Posterior vena cava (tissue), 2 donors: ENCODE measurements at regions of chr14 and their contacts with region 1.

Region 1: DNA sequence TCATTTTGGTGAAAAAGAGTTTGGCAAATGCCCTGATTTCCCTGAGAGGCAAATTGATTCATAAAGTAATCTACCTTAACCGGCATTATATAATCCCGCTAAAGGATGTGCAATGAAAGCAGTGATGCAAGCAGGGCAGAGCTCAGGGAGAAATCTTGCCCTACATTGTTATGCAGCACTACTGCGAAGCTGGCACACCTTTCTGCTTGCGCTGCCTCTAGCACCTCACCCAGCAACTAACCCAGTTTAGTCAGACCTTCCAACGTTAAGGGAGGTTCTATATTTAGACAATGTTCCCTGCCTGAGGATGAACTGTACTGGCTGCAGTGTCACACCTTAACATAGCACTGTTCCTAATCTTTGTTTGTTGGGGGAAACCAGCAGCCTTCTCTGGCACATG is 60.8 kb upstream of the CCDC196 start:
- DNase-seq: no peak

Region 2: DNA sequence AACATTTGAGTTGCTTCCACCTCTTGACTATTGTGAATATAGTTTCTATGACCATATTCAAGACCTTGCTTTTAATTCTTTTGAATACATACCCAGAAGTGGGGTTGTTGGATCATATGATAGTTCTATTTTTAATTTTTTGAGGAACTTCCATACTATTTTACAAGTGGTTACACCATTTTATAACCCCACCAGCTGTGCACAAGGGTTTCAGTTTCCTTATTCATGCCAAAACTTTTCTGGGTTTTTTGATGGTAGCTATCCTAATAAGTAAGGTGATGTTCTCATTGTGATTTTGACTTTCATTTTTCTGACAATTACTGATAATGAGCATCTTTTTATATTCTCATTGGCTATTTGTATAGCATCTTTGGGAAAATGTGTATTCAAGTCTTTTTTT is 654.4 kb after region 1 on chr14:
- intact Hi-C with region 1: loop called in 1 of 2 experiments (anchors 5 kb)
- DNase-seq: no peak

Region 3: DNA sequence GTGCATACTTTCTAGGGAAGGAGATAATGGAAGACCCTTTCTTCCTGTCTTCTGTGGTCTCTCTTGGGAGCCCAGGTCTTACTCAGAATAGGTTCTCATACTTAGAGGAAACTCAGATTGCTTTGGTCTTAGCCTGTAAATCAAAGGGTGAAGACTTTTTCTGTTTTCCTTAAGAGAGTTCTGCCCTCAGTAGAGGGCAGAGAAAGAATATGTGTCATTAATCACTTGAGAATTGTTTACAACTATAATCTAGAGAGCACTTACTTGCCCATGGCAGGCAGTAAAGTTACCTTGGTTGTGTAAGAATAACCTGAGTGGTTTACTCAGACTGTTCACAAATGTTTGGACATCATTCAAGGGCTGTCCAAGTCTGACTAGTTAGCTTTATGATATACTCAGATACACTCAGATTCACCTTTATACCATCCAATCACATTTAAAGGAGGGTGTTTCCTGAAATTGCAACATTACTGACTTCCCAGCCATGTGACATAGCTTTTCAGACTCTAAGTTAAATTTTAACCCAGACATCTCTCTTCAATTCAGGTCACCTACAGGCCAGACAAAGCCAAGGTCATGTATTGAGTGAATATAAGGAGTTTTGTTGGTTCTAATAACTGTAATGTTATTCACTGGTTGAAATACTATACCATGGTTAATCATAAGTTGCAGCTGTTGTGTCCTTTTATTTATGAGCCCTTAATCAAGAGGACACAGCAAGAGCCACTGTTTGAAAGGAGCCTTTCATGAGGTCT is 1766.3 kb after region 1 on chr14:
- intact Hi-C with region 1: no loop called
- DNase-seq: no peak